ENCODE measurements at regions of chr5 and their contacts with region 1.

Region 1: DNA sequence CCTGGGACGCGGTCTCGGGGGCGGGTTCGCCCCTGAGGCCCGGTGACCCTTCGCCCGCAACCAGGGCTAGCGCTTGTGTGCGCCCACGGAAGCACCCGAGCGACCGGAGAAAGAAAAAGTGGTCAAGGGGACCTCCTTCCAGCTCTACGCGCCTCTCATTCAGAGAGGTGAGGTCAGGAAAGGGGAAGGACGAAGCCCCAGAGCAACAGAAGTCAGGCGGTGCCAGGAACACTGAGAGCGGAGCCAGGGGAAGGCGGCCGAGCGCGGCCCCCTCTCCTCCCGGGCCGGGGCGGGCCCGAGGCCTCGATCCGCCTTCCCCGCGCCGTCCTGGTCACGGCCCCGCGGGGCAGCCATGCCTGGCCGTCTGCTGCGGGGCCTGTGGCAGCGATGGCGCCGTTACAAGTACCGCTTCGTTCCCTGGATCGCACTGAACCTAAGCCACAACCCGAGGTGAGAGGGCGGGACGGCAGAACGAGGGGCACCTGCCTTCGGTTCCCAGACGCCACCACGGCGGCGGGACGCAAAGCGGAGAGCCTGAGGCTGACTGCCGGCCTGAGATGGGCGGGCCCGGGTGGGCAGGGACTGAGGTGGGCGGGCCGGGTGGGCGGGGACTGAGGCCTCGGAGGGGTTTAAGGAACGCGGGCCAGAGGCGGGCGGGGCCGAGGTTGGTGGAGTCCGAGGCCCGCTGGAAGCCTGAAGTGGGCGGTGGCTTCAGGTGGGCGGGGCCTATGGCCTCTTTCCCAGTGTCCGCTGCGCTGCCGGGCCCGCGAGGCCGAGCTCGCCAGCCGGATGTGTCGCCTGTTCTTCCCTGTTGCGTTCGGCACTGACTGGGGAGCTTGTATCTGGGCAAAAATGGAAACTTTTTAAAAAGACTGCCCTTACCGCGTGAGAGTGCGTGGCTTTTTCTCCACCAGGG is at the start of gene SETD9:
- DNase-seq: peak; percentile 98 to 100
- ATAC-seq: peak; percentile 87
- total RNA-seq, gene SETD9: 17.1 to 26.3 TPM

Region 2: GRCh38 chr5:56951946-56952691 is 42.6 kb after region 1 on chr5 and contains the start of gene MIER3:
- intact Hi-C with region 1: loop called in 1 of 2 experiments (anchors 2 kb)
- DNase-seq: peak; percentile 79 to 86
- ATAC-seq: peak; percentile 88
- total RNA-seq, gene MIER3: 84.1 to 170 TPM

Region 3: DNA sequence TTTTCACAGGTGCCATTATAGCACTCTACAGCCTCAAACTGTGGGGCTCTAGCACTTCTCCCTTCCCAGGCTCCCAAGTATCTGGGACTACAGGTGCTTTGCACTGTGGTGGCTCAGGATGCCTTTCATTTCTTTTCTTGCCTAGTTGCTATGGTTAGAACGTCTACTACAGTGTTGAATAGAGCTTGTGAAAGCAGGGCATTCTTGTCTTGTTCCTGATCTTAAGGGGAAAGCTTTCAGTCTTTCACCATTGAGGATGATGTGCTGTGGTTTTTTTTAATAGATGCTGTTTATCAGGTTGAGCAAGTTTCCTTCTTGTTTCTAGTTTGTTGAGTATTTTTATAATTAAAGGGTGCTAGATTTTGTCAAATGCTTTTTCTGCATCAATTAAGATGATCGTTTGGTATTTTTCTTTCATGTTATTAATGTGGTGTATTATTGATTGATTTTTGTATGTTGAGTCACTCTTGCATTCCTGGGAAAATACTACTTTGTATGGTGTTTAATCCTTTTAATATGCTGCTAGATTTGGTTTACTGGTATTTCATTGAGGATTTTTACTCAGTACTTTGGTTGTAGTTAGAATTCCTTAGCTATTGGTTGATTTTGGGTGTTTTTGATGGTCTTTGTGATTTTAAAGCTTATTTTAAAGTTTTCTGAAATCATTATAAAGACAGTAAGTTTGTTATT is 299.9 kb after region 1 on chr5:
- intact Hi-C with region 1: loop called in 1 of 2 experiments (anchors 10 kb)
- DNase-seq: no peak
- ATAC-seq: no peak